B cell (primary cell): ENCODE measurements at regions of chr19 and their contacts with region 1.

Region 1: DNA sequence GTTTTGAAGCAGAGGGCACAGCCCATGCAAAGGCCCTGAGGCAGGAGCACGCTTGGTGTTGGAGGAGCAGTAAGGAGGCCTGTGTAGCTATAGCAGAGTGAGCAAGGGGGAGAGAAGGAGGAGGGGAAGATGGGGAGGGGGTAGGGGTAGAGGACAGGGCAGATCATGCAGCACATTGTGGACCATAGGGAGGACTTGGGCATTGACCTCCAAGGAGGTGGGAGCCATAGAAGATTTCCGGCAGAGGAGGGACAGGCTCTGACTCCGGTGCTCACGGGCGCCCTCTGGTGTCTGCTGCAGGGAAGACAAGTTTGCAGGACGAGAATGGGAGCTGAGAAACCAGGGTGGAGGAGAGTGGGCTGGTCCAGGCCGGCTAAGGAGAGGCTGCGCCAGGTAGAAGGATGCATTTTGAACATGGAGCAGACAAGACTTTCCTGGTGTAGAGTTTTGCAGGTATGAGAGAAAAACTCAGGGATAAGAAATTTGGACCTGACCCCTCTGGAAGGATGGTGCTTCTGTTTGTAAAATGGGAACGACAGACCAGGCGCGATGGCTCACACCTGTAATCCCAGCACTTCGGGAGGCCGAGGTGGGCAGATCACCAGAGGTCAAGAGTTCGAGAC is 13.7 kb upstream of the CREB3L3 start:
- DNase-seq: peak; percentile 83
- ATAC-seq: peak; percentile 95
- H3K4me3 ChIP-seq: no peak overlapping the region
- H3K4me3 Mint-ChIP-seq: peak overlapping the region; percentile 40
- H3K27ac ChIP-seq: no peak overlapping the region
- H3K27ac Mint-ChIP-seq: no peak overlapping the region
- H3K4me1 ChIP-seq: peaks cover 5 to 9% of the 10 kb centered on the region in 2 donors
- H3K4me1 Mint-ChIP-seq: peaks cover 9% of the 10 kb centered on the region
- H3K27me3 ChIP-seq: peaks cover 0 to 3% (median under 1%) of the 10 kb centered on the region in 4 experiments
- H3K27me3 Mint-ChIP-seq: peaks cover 3% of the 10 kb centered on the region
- CTCF ChIP-seq: peak; percentile 72

Region 2: GRCh38 chr19:4007021-4007835 is 132.5 kb before region 1 on chr19 and contains the start of gene PIAS4:
- CTCF ChIA-PET with region 1: interaction called, 15 read pairs
- POLR2A ChIA-PET with region 1: interaction called, 3 read pairs
- intact Hi-C with region 1: no loop called
- DNase-seq: peak; percentile 98
- ATAC-seq: peak; percentile 86
- H3K4me3 ChIP-seq: peak within 1 kb of the TSS; percentile 27 to 84 (median 74)
- H3K4me3 Mint-ChIP-seq: peak within 1 kb of the TSS; percentile 93
- H3K27ac ChIP-seq: peak within 1 kb of the TSS; percentile 55 to 71
- H3K27ac Mint-ChIP-seq: peak within 1 kb of the TSS; percentile 92
- H3K4me1 ChIP-seq: peaks cover 14 to 35% of the 10 kb centered on the region in 2 donors
- H3K4me1 Mint-ChIP-seq: peaks cover 33% of the 10 kb centered on the region
- H3K27me3 ChIP-seq: no peaks in the 10 kb centered on the region
- H3K27me3 Mint-ChIP-seq: no peaks in the 10 kb centered on the region
- CTCF ChIP-seq: no peak
- total RNA-seq, gene PIAS4: 56.8 and 57.2 TPM in 2 replicates

Region 3: DNA sequence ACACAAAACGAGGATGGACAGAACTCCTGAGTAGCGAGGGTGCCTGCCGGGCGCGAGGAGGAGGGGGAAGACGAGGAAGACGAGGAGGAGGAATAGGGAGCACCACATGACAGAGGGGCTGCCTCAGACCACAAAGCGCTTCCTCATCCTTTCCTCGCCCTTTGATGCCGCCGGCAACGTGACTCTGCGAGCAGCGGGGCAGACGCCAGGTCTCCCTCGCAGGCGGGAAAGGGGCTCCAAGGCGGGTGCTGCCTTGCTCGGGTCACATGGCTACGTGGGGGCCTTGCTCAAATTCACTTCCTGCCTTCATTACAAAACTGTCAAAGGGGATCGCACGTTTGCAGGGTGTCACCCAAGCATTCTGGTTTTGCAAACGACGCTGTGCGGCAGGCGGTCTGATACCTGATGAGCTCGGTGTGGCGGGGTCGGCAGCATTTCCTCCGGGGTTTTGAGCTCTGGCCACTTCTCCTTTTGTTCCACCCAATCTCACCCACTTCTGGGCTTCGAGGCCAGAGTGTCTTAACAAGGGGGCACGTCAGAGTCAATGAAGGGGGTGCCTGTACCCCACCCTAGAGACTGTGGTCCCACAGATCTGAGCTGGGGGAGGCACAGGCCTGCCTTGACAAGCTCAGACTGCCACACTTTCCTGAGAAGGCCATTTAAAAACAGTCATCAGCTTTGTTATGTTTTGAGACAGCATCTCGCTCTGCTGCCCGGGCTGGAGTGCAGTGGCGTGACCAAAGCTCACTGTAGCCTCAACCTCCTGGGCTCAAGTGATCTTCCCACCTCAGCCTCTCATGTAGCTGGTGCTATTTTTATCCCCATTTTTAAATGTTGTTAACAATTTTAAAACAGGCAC is 30.7 kb before region 1 on chr19:
- CTCF ChIA-PET with region 1: interaction called, 20 read pairs
- POLR2A ChIA-PET with region 1: interaction called, 10 read pairs
- intact Hi-C with region 1: loop called (anchors 2 kb)
- DNase-seq: peak; percentile 93
- ATAC-seq: peak; percentile 87
- H3K4me3 ChIP-seq: peak overlapping the region in 4 of 5 experiments; percentile 34 to 49 (median 40)
- H3K4me3 Mint-ChIP-seq: peak overlapping the region; percentile 88
- H3K27ac ChIP-seq: peak overlapping the region; percentile 82 to 85
- H3K27ac Mint-ChIP-seq: peak overlapping the region; percentile 100
- H3K4me1 ChIP-seq: peaks cover 36 to 55% of the 10 kb centered on the region in 2 donors
- H3K4me1 Mint-ChIP-seq: peaks cover 53% of the 10 kb centered on the region
- H3K27me3 ChIP-seq: no peaks in the 10 kb centered on the region
- H3K27me3 Mint-ChIP-seq: no peaks in the 10 kb centered on the region
- CTCF ChIP-seq: no peak

Region 4: DNA sequence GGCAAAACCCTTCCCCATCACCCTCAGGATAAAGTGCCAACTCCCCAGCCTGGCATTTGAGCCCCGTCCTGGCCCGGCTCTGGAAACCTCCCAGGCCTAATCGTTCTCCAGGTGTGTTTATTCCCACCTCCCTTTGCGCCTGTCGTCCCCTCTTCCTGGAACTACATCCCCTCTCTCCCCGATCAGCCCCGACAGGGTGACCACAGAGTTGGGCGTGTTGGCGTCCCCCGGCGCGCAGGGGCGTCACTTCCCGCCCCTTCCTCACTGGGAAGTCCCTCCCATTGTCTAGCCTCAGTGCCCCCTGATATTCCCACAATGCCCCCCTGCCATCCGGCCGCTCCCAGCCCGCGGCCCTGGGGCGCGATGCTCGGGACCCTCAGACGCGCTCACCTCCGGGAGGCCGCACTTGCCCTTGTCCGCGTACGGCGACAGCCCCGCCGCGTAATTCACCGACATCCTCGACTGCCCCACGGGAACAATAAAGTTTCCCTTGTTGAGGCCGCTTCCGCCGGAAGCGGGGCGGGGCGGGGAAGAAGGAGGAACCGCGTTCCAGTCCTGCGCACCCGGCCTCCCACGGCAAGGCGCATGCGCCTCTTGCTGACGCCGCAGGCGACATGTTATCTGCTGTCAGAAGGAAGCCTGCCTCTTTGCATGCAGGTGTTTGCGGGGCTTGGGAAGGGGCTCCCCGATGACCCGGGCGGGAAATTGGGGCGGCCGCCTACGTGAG is 42.5 kb after region 1 on chr19 and contains the starts of genes ANKRD24 and SIRT6:
- CTCF ChIA-PET with region 1: interaction called, 5 read pairs
- POLR2A ChIA-PET with region 1: no interaction called
- intact Hi-C with region 1: loop called (anchors 2 kb)
- DNase-seq: peak; percentile 97
- ATAC-seq: peak; percentile 83
- H3K4me3 ChIP-seq: peak within 1 kb of the TSS; percentile 65 to 91 (median 85)
- H3K4me3 Mint-ChIP-seq: peak within 1 kb of the TSS; percentile 99
- H3K27ac ChIP-seq: peak within 1 kb of the TSS; percentile 72 to 95
- H3K27ac Mint-ChIP-seq: peak within 1 kb of the TSS; percentile 98
- H3K4me1 ChIP-seq: peaks cover 20 to 32% of the 10 kb centered on the region in 2 donors
- H3K4me1 Mint-ChIP-seq: peaks cover 37% of the 10 kb centered on the region
- H3K27me3 ChIP-seq: no peaks in the 10 kb centered on the region
- H3K27me3 Mint-ChIP-seq: peaks cover 6% of the 10 kb centered on the region
- CTCF ChIP-seq: no peak
- total RNA-seq, gene ANKRD24: 0.37 and 1.4 TPM in 2 replicates
- total RNA-seq, gene SIRT6: 27.8 and 30.4 TPM in 2 replicates